GM10248 (cell line): ENCODE measurements at regions of chr2 and their contacts with region 1.

Region 1: DNA sequence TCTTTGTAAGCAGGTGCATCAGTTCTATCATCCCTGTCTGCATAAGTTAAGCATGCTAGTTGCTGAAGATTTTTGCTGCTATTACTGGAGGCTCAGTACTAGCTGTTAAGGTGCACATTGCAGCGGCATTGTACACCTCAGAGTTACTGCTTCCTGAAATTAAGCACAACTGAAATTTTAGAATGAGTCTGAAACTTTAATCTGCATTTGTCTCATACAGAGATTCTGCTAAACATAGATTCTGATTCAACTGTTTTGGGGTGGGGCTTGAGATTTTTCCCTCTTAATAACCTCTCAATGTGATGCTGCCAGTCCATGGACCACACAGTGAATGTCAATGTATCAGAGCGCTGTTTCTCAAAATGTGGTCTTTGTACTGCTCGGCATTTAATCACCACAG is 585.7 kb upstream of the GCFC2 start:
- DNase-seq: no peak
- CTCF ChIP-seq: no peak

Region 2: GRCh38 chr2:76211991-76212985 is 84.2 kb before region 1 on chr2:
- CTCF ChIA-PET with region 1: no interaction called
- POLR2A ChIA-PET with region 1: no interaction called
- DNase-seq: no peak
- CTCF ChIP-seq: no peak

Region 3: GRCh38 chr2:76275788-76276187 is 20.6 kb before region 1 on chr2:
- CTCF ChIA-PET with region 1: no interaction called
- POLR2A ChIA-PET with region 1: no interaction called
- DNase-seq: no peak
- CTCF ChIP-seq: no peak

Region 4: DNA sequence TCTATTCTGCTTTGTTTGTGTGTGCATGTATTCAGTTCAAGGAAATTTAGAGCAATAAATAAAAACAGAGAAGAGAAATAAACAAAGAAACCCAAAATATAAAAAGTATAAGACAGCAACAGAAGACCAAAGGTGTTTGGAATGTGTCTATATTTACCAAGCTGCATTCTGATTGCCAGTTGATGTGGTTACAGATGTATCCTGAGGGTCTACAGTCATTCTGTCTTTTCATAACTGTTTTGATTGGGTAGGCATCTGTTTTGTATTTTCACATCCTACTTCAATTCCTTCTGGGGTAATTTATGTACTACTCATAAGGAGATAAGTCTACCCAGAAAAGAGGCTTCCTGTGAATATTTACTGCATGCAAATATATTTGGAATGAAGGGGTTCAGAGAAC is 11.0 kb after region 1 on chr2:
- CTCF ChIA-PET with region 1: interaction called, 10 read pairs
- POLR2A ChIA-PET with region 1: no interaction called
- DNase-seq: no peak
- CTCF ChIP-seq: no peak

Region 5: GRCh38 chr2:76318848-76319360 is 22.5 kb after region 1 on chr2:
- CTCF ChIA-PET with region 1: no interaction called
- POLR2A ChIA-PET with region 1: no interaction called
- DNase-seq: no peak
- CTCF ChIP-seq: no peak